ENCODE measurements at regions of chr9 and their contacts with region 1.

Region 1: GRCh38 chr9:19456996-19457692 is 48.3 kb downstream of the ACER2 start:
- H3K4me3 Mint-ChIP-seq: peak overlapping the region; percentile 28
- H3K27ac Mint-ChIP-seq: no peak overlapping the region
- H3K4me1 Mint-ChIP-seq: peaks cover 10% of the 10 kb centered on the region
- H3K27me3 Mint-ChIP-seq: no peaks in the 10 kb centered on the region

Region 2: GRCh38 chr9:18255158-18255629 is 1202.0 kb before region 1 on chr9:
- intact Hi-C with region 1: loop called (anchors 10 kb)
- H3K4me3 Mint-ChIP-seq: no peak overlapping the region
- H3K27ac Mint-ChIP-seq: no peak overlapping the region
- H3K4me1 Mint-ChIP-seq: no peaks in the 10 kb centered on the region
- H3K27me3 Mint-ChIP-seq: peaks cover 6% of the 10 kb centered on the region

Region 3: GRCh38 chr9:19085295-19085694 is 371.8 kb before region 1 on chr9:
- intact Hi-C with region 1: loop called (anchors 10 kb)
- H3K4me3 Mint-ChIP-seq: no peak overlapping the region
- H3K27ac Mint-ChIP-seq: no peak overlapping the region
- H3K4me1 Mint-ChIP-seq: no peaks in the 10 kb centered on the region
- H3K27me3 Mint-ChIP-seq: no peaks in the 10 kb centered on the region

Region 4: DNA sequence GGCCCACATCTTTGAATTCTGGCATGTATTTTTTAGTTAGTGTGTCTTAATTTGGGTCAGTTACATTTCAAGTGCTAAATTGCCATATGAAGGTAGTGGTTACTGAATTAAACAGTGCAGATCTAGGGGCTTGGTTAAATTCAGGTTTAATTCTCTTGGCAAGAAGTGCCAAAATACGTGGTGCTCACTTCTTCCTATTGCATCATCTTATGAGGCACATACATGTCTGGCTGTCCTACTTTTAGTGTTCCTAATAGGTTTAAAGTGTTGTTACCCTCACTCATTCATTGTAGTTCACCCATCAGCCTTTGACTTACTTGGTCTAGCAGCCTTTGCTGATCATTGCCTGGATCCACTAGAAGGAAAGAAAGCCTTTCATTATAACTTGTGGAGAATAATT is 136.6 kb before region 1 on chr9:
- intact Hi-C with region 1: loop called (anchors 10 kb)
- H3K4me3 Mint-ChIP-seq: no peak overlapping the region
- H3K27ac Mint-ChIP-seq: no peak overlapping the region
- H3K4me1 Mint-ChIP-seq: no peaks in the 10 kb centered on the region
- H3K27me3 Mint-ChIP-seq: no peaks in the 10 kb centered on the region

Region 5: GRCh38 chr9:19379697-19380046 is 77.5 kb before region 1 on chr9:
- intact Hi-C with region 1: loop called (anchors 1 kb)
- H3K4me3 Mint-ChIP-seq: peak overlapping the region; percentile 96
- H3K27ac Mint-ChIP-seq: peak overlapping the region; percentile 97
- H3K4me1 Mint-ChIP-seq: peaks cover 36% of the 10 kb centered on the region
- H3K27me3 Mint-ChIP-seq: no peaks in the 10 kb centered on the region